Panc1 (cell line): ENCODE measurements at regions of chr11 and their contacts with region 1.

Region 1: GRCh38 chr11:2129699-2130366 is 9.4 kb downstream of the IGF2 start:
- DNase-seq: no peak
- ATAC-seq: no peak
- H3K4me3 ChIP-seq: no peak overlapping the region
- H3K27ac ChIP-seq: no peak overlapping the region
- H3K4me1 ChIP-seq: no peaks in the 10 kb centered on the region; the same call in 1 of the 2 replicates
- H3K27me3 ChIP-seq: no peaks in the 10 kb centered on the region
- CTCF ChIP-seq: no peak

Region 2: DNA sequence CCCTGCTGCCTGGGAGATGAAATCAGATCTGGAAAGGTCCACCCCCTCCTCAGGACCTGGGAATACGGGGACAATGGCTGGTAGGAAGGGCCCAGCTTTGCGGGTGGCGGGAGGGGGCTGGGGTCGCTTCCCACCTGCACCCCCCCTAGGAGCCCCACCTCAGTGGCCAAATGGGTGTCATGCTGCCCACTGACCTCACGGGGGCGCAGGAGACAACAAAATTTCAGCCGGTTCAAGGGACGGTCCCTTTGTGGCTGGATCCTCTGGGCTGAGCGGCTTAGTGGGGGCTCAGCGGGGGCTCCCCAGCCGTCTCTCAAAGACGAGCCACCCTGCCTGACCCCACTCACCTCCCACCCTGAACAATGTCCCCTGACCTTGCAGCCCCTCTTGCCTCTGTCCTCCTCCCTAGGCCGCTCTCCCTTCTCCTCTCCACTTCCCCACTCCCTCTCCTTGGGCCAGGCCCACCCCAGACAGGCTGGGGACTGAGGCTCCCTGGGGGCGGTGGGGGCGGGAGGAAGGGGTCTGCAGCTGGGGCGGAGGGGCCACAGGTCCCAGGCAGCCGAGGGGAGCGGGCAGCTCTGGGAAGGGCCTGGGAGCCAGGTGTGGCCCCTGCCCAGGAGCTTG is 92.9 kb before region 1 on chr11:
- CTCF ChIA-PET with region 1: interaction called, 11 read pairs
- POLR2A ChIA-PET with region 1: no interaction called
- in situ Hi-C with region 1: no loop called
- intact Hi-C with region 1: no loop called
- DNase-seq: no peak
- ATAC-seq: peak; percentile 80
- H3K4me3 ChIP-seq: no peak overlapping the region
- H3K27ac ChIP-seq: no peak overlapping the region
- H3K4me1 ChIP-seq: no peaks in the 10 kb centered on the region
- H3K27me3 ChIP-seq: no peaks in the 10 kb centered on the region
- CTCF ChIP-seq: no peak

Region 3: DNA sequence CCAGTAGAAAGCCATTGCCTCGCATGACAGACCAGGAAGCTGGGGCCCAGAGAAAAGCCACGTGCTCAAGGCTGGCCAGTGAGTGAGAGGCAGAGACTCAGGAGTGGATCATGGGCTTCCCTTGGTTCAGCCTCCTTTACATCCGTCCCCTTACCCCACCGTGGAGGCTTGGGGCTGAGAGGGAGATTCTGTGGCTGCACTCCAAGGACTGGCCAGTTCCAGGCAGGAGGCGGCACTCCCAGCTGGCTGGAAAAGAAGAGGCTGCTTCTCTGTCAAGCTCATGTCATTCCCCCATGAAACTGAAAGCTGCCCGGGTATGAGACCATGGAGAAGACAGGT is 147.1 kb after region 1 on chr11:
- CTCF ChIA-PET with region 1: no interaction called
- POLR2A ChIA-PET with region 1: no interaction called
- in situ Hi-C with region 1: no loop called
- intact Hi-C with region 1: no loop called
- DNase-seq: no peak
- ATAC-seq: no peak
- H3K4me3 ChIP-seq: no peak overlapping the region
- H3K27ac ChIP-seq: no peak overlapping the region
- H3K4me1 ChIP-seq: no peaks in the 10 kb centered on the region
- H3K27me3 ChIP-seq: peaks cover 15% of the 10 kb centered on the region
- CTCF ChIP-seq: no peak